GM23248 (cell line): ENCODE measurements at regions of chr11 and their contacts with region 1.

Region 1: DNA sequence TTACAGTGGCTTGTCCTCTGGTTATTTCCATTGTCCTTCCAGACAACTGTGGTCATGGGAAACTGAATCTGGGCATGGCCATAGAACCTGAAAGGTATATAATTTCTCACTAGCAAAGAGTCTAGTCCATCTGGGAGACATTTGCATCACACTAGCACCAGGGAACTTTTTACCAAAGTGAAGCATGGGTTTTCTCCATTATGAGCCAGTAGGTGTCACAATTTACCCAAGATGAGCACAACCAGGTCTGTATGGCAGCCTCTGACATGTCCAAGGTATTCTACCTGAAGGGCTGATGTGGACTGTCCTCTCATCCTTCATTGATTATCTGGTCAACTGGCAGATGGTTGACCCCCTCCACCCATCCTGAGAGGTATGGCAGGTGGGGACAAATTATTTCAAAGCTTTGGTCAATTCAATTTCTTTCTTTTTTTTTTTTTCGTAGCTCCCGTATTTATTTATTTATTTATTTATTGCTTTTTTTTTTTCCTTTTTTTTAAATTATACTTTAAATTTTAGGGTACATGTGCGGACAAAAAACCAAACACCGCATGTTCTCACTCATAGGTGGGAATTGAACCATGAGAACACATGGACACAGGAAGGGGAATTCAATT is 425.9 kb downstream of the TMEM135 start:
- DNase-seq: peak; percentile 64
- H3K4me3 ChIP-seq: no peak overlapping the region
- H3K27ac ChIP-seq: no peak overlapping the region
- H3K4me1 ChIP-seq: peaks cover 11% of the 10 kb centered on the region
- H3K27me3 ChIP-seq: no peaks in the 10 kb centered on the region

Region 2: GRCh38 chr11:86571273-86571948 is 892.2 kb before region 1 on chr11:
- in situ Hi-C with region 1: no loop called
- DNase-seq: no peak
- H3K4me3 ChIP-seq: no peak overlapping the region
- H3K27ac ChIP-seq: no peak overlapping the region
- H3K4me1 ChIP-seq: peaks cover 4% of the 10 kb centered on the region; the same call in 1 of the 2 replicates
- H3K27me3 ChIP-seq: no peaks in the 10 kb centered on the region

Region 3: DNA sequence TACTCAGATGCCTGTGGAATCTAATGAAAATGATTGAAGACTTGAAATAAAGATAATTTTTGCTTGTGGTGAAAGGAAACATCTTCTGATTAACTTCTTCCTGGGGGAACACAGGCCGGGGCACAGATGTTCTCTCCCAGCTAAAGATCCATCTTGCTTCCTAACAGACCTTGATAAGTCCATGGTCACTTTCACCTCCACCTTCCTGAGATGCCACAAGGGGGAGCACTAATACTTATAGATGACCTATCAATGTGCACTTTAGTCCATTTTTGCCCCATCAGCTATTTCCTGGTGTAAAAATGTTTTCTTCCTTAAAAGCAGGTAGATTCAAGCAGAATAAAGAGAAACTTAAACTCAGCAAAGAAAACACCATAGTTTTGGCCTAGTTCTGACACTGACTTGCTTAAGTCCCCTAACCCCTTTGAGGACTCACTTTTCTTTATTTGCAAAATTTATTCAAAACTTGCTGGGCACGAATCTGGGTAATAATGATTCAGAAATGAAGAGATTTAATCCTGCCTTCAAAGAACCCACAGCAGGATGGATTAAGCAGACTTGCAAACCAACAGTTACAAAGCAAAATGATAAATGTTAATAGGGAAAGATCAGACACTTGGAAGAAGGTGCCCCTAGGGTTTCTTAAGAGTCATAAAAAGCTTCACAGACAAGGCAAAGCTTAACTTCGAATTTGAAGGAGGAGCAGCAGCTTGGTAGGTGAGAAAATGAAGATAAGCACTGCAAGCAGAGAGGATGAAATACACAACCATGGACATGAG is 553.0 kb after region 1 on chr11:
- in situ Hi-C with region 1: loop called (anchors 25 kb)
- DNase-seq: peak; percentile 84
- H3K4me3 ChIP-seq: no peak overlapping the region
- H3K27ac ChIP-seq: no peak overlapping the region
- H3K4me1 ChIP-seq: no peaks in the 10 kb centered on the region
- H3K27me3 ChIP-seq: no peaks in the 10 kb centered on the region